ENCODE measurements at regions of chr18 and their contacts with region 1.

Region 1: GRCh38 chr18:69804776-69805501 is 142.7 kb downstream of the CD226 start:
- DNase-seq: no peak
- ATAC-seq: no peak
- H3K4me3 Mint-ChIP-seq: no peak overlapping the region
- H3K27ac Mint-ChIP-seq: no peak overlapping the region
- H3K4me1 Mint-ChIP-seq: no peaks in the 10 kb centered on the region
- H3K27me3 Mint-ChIP-seq: no peaks in the 10 kb centered on the region

Region 2: GRCh38 chr18:69239849-69240674 is 564.9 kb before region 1 on chr18:
- CTCF ChIA-PET with region 1: no interaction called
- POLR2A ChIA-PET with region 1: no interaction called
- intact Hi-C with region 1: loop called in 1 of 2 experiments (anchors 10 kb)
- DNase-seq: no peak
- ATAC-seq: no peak
- H3K4me3 Mint-ChIP-seq: no peak overlapping the region
- H3K27ac Mint-ChIP-seq: no peak overlapping the region
- H3K4me1 Mint-ChIP-seq: no peaks in the 10 kb centered on the region
- H3K27me3 Mint-ChIP-seq: peaks cover 2% of the 10 kb centered on the region